ENCODE measurements at regions of chr19 and their contacts with region 1.

Region 1: DNA sequence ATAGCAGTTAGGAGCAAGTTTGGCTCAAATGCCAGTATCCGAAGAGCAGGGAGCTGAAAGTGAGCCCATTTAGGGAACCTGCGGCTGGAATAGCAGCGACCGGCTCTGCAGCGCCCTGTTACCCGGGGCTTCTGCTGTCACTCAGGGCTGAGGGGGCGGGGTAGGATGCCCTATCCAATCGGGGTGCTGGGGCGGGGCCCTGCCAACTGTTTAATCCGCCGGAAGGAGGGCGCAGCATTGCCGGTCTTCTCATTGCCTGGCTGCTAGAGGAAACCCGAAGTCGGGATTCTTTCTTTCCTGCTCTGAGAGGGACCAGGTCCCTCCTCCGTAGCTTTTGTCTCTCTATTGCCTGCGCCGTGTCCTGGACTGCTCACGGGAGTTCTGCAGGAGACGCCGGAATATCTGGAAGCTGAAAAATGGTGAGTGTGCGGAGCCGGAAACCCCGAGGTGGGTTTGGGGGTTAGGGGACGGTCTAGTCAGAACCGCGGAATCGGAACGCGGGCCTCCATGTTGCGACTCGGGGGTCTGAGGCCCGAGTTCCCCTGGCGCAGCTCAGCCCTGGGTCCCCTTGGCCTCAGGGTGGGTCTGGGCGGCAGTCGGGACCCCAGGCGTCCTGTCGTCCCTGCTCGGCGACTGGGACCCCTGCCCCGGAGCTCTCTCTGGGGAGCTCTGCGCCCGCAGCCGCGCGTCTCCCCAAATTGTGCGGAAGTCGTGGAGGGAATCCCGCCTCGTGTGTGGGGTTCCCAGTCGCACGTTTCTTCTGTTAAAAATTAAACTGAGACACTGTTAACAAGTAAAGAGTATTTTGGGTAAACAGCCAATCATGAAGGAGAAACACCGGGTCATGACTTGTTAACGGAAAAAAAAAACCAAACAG is 22.8 kb downstream of the ZNF763 start:
- DNase-seq: peak; percentile 98
- ATAC-seq: peak; percentile 97
- H3K4me3 ChIP-seq: peak overlapping the region; percentile 88
- H3K27ac ChIP-seq: peak overlapping the region; percentile 19
- H3K4me1 ChIP-seq: no peaks in the 10 kb centered on the region
- H3K27me3 ChIP-seq: no peaks in the 10 kb centered on the region
- CTCF ChIP-seq: no peak

Region 2: GRCh38 chr19:11798391-11799330 is 189.0 kb before region 1 on chr19 and contains the start of gene ZNF491:
- CTCF ChIA-PET with region 1: interaction called, 26 read pairs
- POLR2A ChIA-PET with region 1: no interaction called
- intact Hi-C with region 1: loop called (anchors 1 kb)
- DNase-seq: peak; percentile 90
- ATAC-seq: peak; percentile 97
- H3K4me3 ChIP-seq: peak within 1 kb of the TSS; percentile 84
- H3K27ac ChIP-seq: no peak within 1 kb of the TSS
- H3K4me1 ChIP-seq: peaks cover 11% of the 10 kb centered on the region
- H3K27me3 ChIP-seq: no peaks in the 10 kb centered on the region
- CTCF ChIP-seq: peak; percentile 57
- total RNA-seq, gene ZNF491: 0.17 and 0.47 TPM in 2 replicates

Region 3: GRCh38 chr19:11924886-11925650 is 62.6 kb before region 1 on chr19 and contains the start of gene ZNF700:
- CTCF ChIA-PET with region 1: interaction called, 4 read pairs
- POLR2A ChIA-PET with region 1: interaction called, 3 read pairs
- intact Hi-C with region 1: loop called (anchors 1 kb)
- DNase-seq: peak; percentile 98
- ATAC-seq: peak; percentile 92
- H3K4me3 ChIP-seq: peak within 1 kb of the TSS; percentile 83
- H3K27ac ChIP-seq: peak within 1 kb of the TSS; percentile 53
- H3K4me1 ChIP-seq: peaks cover 4% of the 10 kb centered on the region; the same call in 1 of the 2 replicates
- H3K27me3 ChIP-seq: no peaks in the 10 kb centered on the region
- CTCF ChIP-seq: no peak
- total RNA-seq, gene ZNF700: 6.7 and 9.5 TPM in 2 replicates

Region 4: GRCh38 chr19:11964858-11965645 is 22.6 kb before region 1 on chr19 and contains the start of gene ZNF763:
- CTCF ChIA-PET with region 1: interaction called, 7 read pairs
- POLR2A ChIA-PET with region 1: interaction called, 13 read pairs
- intact Hi-C with region 1: loop called (anchors 1 kb)
- DNase-seq: peak; percentile 75
- ATAC-seq: peak; percentile 93
- H3K4me3 ChIP-seq: peak within 1 kb of the TSS; percentile 68
- H3K27ac ChIP-seq: no peak within 1 kb of the TSS
- H3K4me1 ChIP-seq: no peaks in the 10 kb centered on the region
- H3K27me3 ChIP-seq: no peaks in the 10 kb centered on the region
- CTCF ChIP-seq: no peak
- total RNA-seq, gene ZNF763: 0.33 TPM in 1 of 2 replicates, not detected in the other

Region 5: GRCh38 chr19:12035220-12036153 is 47.8 kb after region 1 on chr19 and contains the start of gene ZNF433:
- CTCF ChIA-PET with region 1: interaction called, 3 read pairs
- POLR2A ChIA-PET with region 1: no interaction called
- intact Hi-C with region 1: loop called (anchors 2 kb)
- DNase-seq: peak; percentile 98
- ATAC-seq: peak; percentile 99
- H3K4me3 ChIP-seq: peak within 1 kb of the TSS; percentile 89
- H3K27ac ChIP-seq: 0 out of 2 replicates have a peak within 1 kb of the TSS, but pooled peaks have one; percentile 14
- H3K4me1 ChIP-seq: peaks cover 10% of the 10 kb centered on the region
- H3K27me3 ChIP-seq: no peaks in the 10 kb centered on the region
- CTCF ChIP-seq: no peak
- total RNA-seq, gene ZNF433: 5.4 and 7.8 TPM in 2 replicates

Region 6: GRCh38 chr19:12139885-12140547 is 152.4 kb after region 1 on chr19 and contains the start of gene ZNF20:
- CTCF ChIA-PET with region 1: interaction called, 6 read pairs
- POLR2A ChIA-PET with region 1: no interaction called
- intact Hi-C with region 1: loop called (anchors 1 kb)
- DNase-seq: peak; percentile 98
- ATAC-seq: peak; percentile 94
- H3K4me3 ChIP-seq: peak within 1 kb of the TSS; percentile 95
- H3K27ac ChIP-seq: peak within 1 kb of the TSS; percentile 45
- H3K4me1 ChIP-seq: peaks cover 14% of the 10 kb centered on the region
- H3K27me3 ChIP-seq: no peaks in the 10 kb centered on the region
- CTCF ChIP-seq: no peak
- total RNA-seq, gene ZNF20: 3.9 and 5.6 TPM in 2 replicates

Region 7: DNA sequence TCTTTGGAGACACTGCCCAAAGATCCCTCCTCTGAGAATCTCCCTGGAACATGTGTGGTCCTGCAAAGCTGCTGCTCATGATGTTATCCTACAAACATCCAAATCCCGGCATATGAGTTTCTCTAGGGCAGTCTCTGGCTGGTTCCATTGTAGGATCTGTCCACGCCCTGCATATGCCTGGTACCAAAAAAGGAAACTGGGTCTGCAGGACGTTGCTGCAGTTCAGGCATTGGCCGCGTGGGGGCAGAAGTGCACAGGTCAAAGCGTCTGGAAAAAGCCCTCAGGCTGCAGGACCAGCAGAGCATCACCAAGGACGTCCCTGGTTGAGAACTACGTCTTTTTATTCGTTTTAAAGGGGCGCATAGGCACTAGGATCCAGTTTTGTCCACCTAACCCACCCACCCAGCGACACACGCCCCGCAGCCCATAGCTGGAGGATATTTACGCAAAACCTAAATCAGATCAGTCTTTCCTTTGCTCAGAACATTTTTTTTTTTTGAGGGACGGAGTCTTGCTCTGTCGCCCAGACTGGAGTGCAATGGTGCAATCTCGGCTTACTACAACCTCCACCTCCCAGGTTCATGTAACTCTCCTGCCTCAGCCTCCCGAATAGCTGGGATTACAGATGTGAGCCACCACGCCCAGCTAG is 576.5 kb after region 1 on chr19:
- CTCF ChIA-PET with region 1: interaction called, 10 read pairs
- POLR2A ChIA-PET with region 1: no interaction called
- intact Hi-C with region 1: no loop called
- DNase-seq: peak; percentile 96
- ATAC-seq: peak; percentile 95
- H3K4me3 ChIP-seq: peak overlapping the region; percentile 14; the same call in 1 of the 2 replicates
- H3K27ac ChIP-seq: no peak overlapping the region
- H3K4me1 ChIP-seq: 0 out of 2 replicates have a peak, but pooled peaks cover 3% of the 10 kb centered on the region
- H3K27me3 ChIP-seq: no peaks in the 10 kb centered on the region
- CTCF ChIP-seq: peak; percentile 98